ENCODE measurements at regions of chr9 and their contacts with region 1.

Region 1: DNA sequence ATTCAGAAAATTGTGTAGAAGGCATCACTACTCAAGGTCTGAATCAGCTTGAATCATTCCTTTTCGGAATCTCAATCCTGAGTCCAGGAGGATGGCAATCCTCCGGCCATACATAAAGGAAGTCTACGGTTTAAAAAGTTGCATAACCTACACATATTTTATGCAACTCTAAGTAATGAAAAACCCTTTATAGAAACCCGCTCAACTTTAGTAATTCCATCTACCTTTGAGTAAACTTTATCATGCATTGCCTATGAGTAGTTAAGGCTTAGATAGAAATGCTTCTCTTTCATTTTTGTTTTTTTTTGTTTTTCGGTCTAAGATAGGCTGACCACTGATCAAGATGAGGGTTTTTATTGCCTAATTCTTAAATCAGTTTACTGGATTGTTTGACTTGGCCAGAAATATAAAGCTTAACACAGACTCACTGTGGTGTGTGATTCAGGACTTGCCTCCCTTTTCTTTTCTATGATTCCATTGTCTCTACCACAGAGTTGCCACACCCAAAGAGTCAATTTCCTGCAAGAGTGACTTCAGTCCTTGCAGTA is 85.0 kb downstream of the LURAP1L start:
- DNase-seq: no peak
- ATAC-seq: peak in 3 of 4 donors; percentile 67 to 81 (median 69)
- H3K4me3 ChIP-seq: no peak overlapping the region
- H3K27ac ChIP-seq: peak overlapping the region in 1 of 12 donors; percentile 28
- H3K4me1 ChIP-seq: peaks cover 0 to 22% (median 4%) of the 10 kb centered on the region in 12 donors
- H3K27me3 ChIP-seq: no peaks in the 10 kb centered on the region
- CTCF ChIP-seq: no peak
- POLR2A ChIP-seq: no peak

Region 2: GRCh38 chr9:12695474-12695873 is 164.3 kb before region 1 on chr9:
- intact Hi-C with region 1: no loop called
- DNase-seq: peak in 4 of 5 donors; percentile 57 to 71 (median 66)
- ATAC-seq: peak; percentile 83 to 88 (median 86)
- H3K4me3 ChIP-seq: peak overlapping the region in 11 of 12 donors; percentile 23 to 55 (median 44)
- H3K27ac ChIP-seq: peak overlapping the region in 9 of 12 donors; percentile 9 to 70 (median 55)
- H3K4me1 ChIP-seq: peaks cover 0 to 12% (median 0%) of the 10 kb centered on the region in 12 donors
- H3K27me3 ChIP-seq: no peaks in the 10 kb centered on the region
- CTCF ChIP-seq: no peak
- POLR2A ChIP-seq: peak in 1 of 2 donors; percentile 20

Region 3: GRCh38 chr9:12794101-12794799 is 65.5 kb before region 1 on chr9:
- intact Hi-C with region 1: no loop called
- DNase-seq: no peak
- ATAC-seq: no peak
- H3K4me3 ChIP-seq: no peak overlapping the region
- H3K27ac ChIP-seq: peak overlapping the region in 1 of 12 donors; percentile 2
- H3K4me1 ChIP-seq: peaks cover 0 to 28% (median 2%) of the 10 kb centered on the region in 12 donors
- H3K27me3 ChIP-seq: no peaks in the 10 kb centered on the region
- CTCF ChIP-seq: no peak
- POLR2A ChIP-seq: no peak

Region 4: GRCh38 chr9:12819436-12820185 is 40.2 kb before region 1 on chr9:
- intact Hi-C with region 1: loop called in 1 of 10 experiments (anchors 5 kb)
- DNase-seq: no peak
- ATAC-seq: no peak
- H3K4me3 ChIP-seq: no peak overlapping the region
- H3K27ac ChIP-seq: peak overlapping the region in 1 of 12 donors; percentile 25
- H3K4me1 ChIP-seq: peaks cover 0 to 21% (median 4%) of the 10 kb centered on the region in 12 donors
- H3K27me3 ChIP-seq: no peaks in the 10 kb centered on the region
- CTCF ChIP-seq: peak in 11 of 12 donors; percentile 7 to 50 (median 32)
- POLR2A ChIP-seq: no peak

Measured in heart left ventricle (tissue), 16 donors.